ENCODE measurements at regions of chr19 and their contacts with region 1.

Region 1: GRCh38 chr19:38812841-38813320 is at the start of gene LGALS4:
- DNase-seq: peak; percentile 89 to 95 (median 91)
- ATAC-seq: peak; percentile 92 to 97 (median 94)
- H3K4me3 ChIP-seq: peak within 1 kb of the TSS; percentile 4 to 42 (median 37)
- H3K27ac ChIP-seq: peak within 1 kb of the TSS; percentile 24 to 38 (median 29)
- H3K4me1 ChIP-seq: peaks cover 0 to 14% (median 4%) of the 10 kb centered on the region in 4 donors
- H3K27me3 ChIP-seq: no peaks in the 10 kb centered on the region
- CTCF ChIP-seq: peak in 2 of 4 donors; percentile 23 to 30
- POLR2A ChIP-seq: peak; percentile 86
- total RNA-seq, gene LGALS4: 21.0 to 376 (median 186) TPM

Region 2: DNA sequence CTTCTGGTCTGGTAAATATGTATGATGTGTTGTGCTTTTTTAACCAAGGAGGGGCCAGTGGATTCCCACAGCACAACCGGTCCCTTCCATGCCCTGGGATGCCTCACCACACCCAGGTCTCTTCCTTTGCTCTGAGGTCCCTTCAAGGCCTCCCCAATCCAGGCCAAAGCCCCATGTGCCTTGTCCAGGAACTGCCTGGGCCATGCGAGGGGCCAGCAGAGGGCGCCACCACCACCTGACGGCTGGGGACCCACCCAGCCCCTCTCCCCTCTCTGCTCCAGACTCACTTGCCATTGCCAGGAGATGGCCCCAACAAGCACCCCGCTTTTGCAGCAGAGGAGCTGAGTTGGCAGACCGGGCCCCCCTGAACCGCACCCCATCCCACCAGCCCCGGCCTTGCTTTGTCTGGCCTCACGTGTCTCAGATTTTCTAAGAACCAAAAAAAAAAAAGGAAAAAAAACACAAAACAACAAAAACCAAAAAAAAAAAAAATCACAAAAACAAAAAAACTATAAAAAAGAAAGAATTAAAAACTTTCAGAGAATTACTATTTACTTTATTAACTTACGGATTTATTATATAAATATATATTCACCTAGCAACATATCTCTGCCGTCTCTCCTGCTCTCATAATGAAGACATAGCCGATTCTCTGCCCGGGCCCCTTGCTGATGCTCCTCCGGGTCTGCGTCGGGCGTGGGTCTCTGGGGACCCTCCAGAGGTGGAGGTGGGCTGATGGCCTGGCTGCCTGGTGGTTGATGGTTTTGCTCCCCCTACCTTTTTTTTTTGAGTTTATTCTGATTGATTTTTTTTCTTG is 83.0 kb before region 1 on chr19:
- intact Hi-C with region 1: loop called in 1 of 2 experiments (anchors 10 kb)
- DNase-seq: peak; percentile 66 to 74 (median 74)
- ATAC-seq: peak; percentile 37 to 55 (median 51)
- H3K4me3 ChIP-seq: no peak overlapping the region
- H3K27ac ChIP-seq: no peak overlapping the region
- H3K4me1 ChIP-seq: peaks cover 0 to 32% (median 3%) of the 10 kb centered on the region in 4 donors
- H3K27me3 ChIP-seq: no peaks in the 10 kb centered on the region
- CTCF ChIP-seq: peak; percentile 69 to 82 (median 77)
- POLR2A ChIP-seq: no peak

Region 3: GRCh38 chr19:39070888-39071287 is 258.0 kb after region 1 on chr19:
- intact Hi-C with region 1: loop called in 1 of 2 experiments (anchors 5 kb)
- DNase-seq: no peak
- ATAC-seq: no peak
- H3K4me3 ChIP-seq: no peak overlapping the region
- H3K27ac ChIP-seq: no peak overlapping the region
- H3K4me1 ChIP-seq: no peaks in the 10 kb centered on the region
- H3K27me3 ChIP-seq: no peaks in the 10 kb centered on the region
- CTCF ChIP-seq: no peak
- POLR2A ChIP-seq: no peak

Measured in right lobe of liver (tissue), 6 donors.